Prostate gland (tissue), 2 donors: ENCODE measurements at regions of chr2 and their contacts with region 1.

Region 1: DNA sequence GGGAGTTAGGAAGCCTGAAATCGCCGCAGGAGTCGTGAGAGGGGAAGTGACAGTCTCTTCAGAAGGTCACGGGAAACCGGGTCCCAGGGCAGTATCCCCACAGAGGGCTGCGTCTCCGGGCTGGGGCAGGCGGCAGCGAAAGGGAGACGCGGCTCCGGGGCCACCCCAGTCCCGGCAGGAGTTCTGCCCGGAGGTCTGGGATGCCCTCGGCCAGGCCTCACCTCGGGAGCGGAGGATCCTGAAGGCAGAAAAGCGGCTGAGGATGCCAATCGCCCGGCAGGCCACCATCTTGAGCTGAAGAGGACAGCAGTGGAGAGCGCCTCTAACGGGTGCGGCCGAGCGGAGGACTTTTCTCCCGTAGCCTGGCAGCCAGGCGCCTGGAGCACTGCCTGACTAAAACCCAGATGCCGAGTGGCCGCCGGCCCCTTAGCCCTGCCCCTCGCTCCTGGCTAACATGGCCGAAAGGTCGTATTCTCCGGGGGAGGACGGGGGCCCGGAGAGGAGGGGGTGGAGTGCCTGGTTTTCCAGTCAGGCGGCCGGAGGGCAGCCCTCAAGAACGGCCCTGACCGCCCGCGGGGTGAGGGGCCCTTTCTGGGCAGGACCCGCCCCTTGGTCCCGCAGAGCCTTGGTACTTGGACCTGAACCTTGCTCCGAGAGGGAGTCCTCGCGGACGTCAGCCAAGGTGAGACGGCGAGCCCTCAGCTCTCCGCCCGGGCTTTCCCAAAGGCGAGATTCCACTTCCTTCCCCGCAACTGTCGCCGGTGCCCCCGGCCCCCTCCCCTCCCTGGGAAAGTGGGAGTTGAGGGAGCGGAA is at the starts of genes HADHA and HADHB:
- DNase-seq: peak; percentile 83
- H3K4me3 ChIP-seq: peak within 1 kb of the TSS; percentile 78 to 84
- H3K27ac ChIP-seq: peak within 1 kb of the TSS; percentile 95 to 97
- H3K4me1 ChIP-seq: no peaks in the 10 kb centered on the region
- H3K27me3 ChIP-seq: no peaks in the 10 kb centered on the region
- CTCF ChIP-seq: peak in 2 of 4 experiments; percentile 44 to 48
- POLR2A ChIP-seq: peak; percentile 72
- total RNA-seq, gene HADHA: 96.6 to 107 TPM
- total RNA-seq, gene HADHB: 119 to 130 TPM

Region 2: DNA sequence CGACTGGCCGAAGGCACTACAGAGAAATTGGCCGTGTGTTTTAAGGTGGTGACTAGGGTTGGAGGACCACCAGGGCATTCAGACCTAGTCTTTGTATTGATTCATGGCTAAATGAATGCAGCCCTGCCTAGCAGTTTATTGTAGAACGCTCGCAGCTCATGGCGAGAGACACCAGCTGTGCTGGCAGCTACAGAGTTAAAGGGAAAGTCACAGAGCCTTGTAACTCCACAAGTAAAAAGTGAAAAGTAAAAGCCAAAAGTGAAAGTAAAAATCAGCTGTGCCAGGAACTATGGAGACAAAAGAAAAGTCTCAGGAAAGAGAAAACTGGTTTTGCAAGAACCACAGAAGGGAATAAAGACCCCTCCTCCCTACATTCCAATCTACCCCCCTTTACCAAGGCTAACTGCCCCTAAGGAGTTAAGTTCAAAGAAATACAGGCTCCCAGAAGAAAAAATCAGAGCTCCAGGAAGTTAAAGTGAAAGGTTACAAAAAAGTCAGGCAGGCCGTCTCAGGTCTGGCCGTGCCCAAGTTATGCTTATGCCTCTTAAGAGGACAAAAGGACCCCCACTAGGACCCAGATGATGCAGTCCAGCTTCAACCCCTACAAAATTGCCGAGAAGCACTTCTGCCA is 55.1 kb after region 1 on chr2:
- intact Hi-C with region 1: loop called (anchors 5 kb)
- DNase-seq: no peak
- H3K4me3 ChIP-seq: peak overlapping the region; percentile 31 to 38
- H3K27ac ChIP-seq: peak overlapping the region; percentile 85 to 95
- H3K4me1 ChIP-seq: no peaks in the 10 kb centered on the region
- H3K27me3 ChIP-seq: no peaks in the 10 kb centered on the region
- CTCF ChIP-seq: no peak
- POLR2A ChIP-seq: peak; percentile 14

Region 3: DNA sequence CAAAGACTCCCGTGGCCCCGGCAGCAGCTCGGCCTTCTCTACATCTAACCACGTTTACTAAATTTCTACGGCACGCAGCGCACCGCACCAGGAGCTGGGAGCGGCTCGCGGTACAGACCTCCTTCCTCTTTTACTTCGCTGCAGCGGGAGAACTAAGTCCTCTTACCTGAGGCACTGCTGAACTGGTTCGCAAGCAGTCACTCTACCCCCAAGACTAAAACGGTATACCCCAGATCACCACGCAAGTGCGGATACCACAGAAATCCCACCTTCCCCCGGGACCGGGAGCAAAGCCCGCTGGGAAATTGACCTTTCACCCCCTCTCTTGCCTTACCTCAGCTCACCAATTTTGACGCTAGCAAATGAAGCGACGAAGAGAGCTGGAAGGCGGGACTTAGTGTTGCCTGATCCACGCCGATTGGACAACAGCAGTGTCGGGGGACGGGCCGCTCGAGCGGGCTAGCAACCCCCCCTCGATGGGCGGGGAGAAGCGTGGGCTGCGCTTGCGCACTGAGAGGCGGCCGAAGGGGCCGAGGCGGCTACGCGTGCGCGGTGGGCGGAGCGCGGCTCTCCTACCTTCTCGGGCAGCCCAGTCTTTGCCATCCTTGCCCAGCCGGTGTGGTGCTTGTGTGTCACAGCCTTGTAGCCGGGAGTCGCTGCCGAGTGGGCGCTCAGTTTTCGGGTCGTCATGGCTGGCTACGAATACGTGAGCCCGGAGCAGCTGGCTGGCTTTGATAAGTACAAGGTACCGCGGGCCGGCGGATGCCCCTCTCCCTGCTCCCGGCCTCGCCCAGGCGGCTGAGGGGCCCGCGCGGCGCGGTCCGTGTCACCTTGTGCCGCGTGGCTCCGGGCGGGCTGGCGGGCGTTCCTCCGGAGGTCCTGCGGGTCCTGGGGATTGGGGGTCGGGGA is 101.3 kb after region 1 on chr2 and contains the start of gene SELENOI:
- intact Hi-C with region 1: loop called (anchors 5 kb)
- DNase-seq: peak; percentile 99
- H3K4me3 ChIP-seq: peak within 1 kb of the TSS; percentile 87 to 95
- H3K27ac ChIP-seq: peak within 1 kb of the TSS; percentile 96 to 97
- H3K4me1 ChIP-seq: no peaks in the 10 kb centered on the region
- H3K27me3 ChIP-seq: no peaks in the 10 kb centered on the region
- CTCF ChIP-seq: no peak
- POLR2A ChIP-seq: peak; percentile 84
- total RNA-seq, gene SELENOI: 14.4 to 15.6 TPM